ENCODE measurements at regions of chr1 and their contacts with region 1.

Region 1: GRCh38 chr1:160711602-160712311 is at the start of gene CD48:
- DNase-seq: no peak
- ATAC-seq: peak; percentile 56
- H3K4me3 ChIP-seq: peak within 1 kb of the TSS; percentile 93
- H3K27ac ChIP-seq: peak within 1 kb of the TSS; percentile 100
- H3K4me1 ChIP-seq: peaks cover 18% of the 10 kb centered on the region
- H3K27me3 ChIP-seq: no peaks in the 10 kb centered on the region
- CTCF ChIP-seq: no peak
- EP300 ChIP-seq: no peak; a peak in 2 of 4 replicates
- POLR2A ChIP-seq: peak; percentile 81
- RAD21 ChIP-seq: no peak
- polyA plus RNA-seq, gene CD48: 667 to 776 TPM

Region 2: DNA sequence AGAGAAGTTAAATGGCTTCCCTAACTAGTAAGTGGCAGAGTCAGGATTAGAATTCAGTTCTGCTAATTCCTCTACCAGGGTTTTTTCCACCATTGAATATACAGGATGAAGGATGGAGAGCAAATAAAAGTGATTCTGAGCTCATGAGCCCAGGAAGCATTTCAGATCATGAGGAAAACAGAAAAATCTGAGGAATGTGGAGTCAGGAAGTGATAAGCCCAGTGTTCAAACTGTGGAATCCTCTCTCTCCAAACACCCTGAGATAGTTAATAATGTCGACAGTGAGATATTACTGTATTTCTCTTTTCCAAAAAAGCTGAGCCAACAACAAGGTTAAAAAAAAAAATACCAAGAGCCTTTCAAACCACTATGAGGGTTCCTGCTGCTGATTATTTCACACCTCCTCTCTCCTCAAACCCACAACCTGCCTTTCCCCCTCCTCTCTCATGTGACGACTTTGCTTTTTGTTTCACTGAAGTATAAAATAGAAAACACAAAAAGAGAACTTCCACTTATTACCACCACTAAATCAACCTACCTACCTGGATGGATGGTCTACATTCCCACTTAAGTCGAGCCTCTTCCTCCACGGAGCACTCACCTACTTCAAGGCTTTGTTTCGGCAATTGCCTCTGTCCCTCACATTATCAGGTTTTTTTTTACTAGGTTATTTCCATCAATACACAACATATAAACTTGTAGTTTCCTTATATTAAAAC is 73.8 kb before region 1 on chr1:
- CTCF ChIA-PET with region 1: interaction called, 3 read pairs
- POLR2A ChIA-PET with region 1: interaction called, 13 read pairs
- RAD21 ChIA-PET with region 1: interaction called, 11 read pairs
- SMC1A ChIA-PET with region 1: interaction called, 36 read pairs
- in situ Hi-C with region 1: no loop called
- intact Hi-C with region 1: no loop called
- DNase-seq: no peak
- ATAC-seq: peak; percentile 29
- H3K4me3 ChIP-seq: peak overlapping the region; percentile 56
- H3K27ac ChIP-seq: peak overlapping the region; percentile 77
- H3K4me1 ChIP-seq: peaks cover 56% of the 10 kb centered on the region
- H3K27me3 ChIP-seq: no peaks in the 10 kb centered on the region
- CTCF ChIP-seq: no peak
- EP300 ChIP-seq: 0 out of 4 replicates have a peak, but pooled peaks have one; percentile 32 to 36
- POLR2A ChIP-seq: no peak
- RAD21 ChIP-seq: no peak

Region 3: GRCh38 chr1:160681067-160681890 is 30.5 kb before region 1 on chr1:
- CTCF ChIA-PET with region 1: interaction called, 59 read pairs
- POLR2A ChIA-PET with region 1: interaction called, 11 read pairs
- RAD21 ChIA-PET with region 1: interaction called, 42 read pairs
- SMC1A ChIA-PET with region 1: interaction called, 79 read pairs
- in situ Hi-C with region 1: no loop called
- intact Hi-C with region 1: loop called (anchors 5 kb)
- DNase-seq: no peak
- ATAC-seq: peak; percentile 89
- H3K4me3 ChIP-seq: no peak overlapping the region
- H3K27ac ChIP-seq: peak overlapping the region; percentile 14; the same call in 1 of the 2 replicates
- H3K4me1 ChIP-seq: peaks cover 38% of the 10 kb centered on the region
- H3K27me3 ChIP-seq: no peaks in the 10 kb centered on the region
- CTCF ChIP-seq: peak; percentile 85 to 97 (median 95); a peak in 5 of 6 replicates
- EP300 ChIP-seq: no peak
- POLR2A ChIP-seq: peak; percentile 61; the same call in 1 of the 2 replicates
- RAD21 ChIP-seq: peak; percentile 91

Region 4: DNA sequence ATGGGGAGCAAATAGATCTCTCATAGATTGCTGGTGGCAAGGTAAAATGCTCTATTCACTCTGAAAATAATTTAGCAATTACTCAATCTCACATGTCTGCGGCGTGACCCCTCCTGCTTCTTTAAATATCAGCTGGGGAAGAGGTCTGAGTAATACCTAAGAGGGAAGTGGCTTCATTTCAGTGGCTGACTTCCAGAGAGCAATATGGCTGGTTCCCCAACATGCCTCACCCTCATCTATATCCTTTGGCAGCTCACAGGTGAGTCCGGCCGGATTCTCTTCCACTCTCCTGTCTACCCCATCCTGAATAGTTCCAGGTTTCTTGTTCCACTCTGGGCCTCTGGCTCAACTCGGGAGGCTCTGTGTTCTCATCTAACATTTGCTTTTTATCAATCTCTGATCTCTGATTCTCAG is 27.3 kb after region 1 on chr1 and contains the start of gene SLAMF7:
- CTCF ChIA-PET with region 1: interaction called, 32 read pairs
- POLR2A ChIA-PET with region 1: interaction called, 39 read pairs
- RAD21 ChIA-PET with region 1: interaction called, 31 read pairs
- SMC1A ChIA-PET with region 1: interaction called, 68 read pairs
- in situ Hi-C with region 1: no loop called
- intact Hi-C with region 1: loop called (anchors 1 kb)
- DNase-seq: peak; percentile 81
- ATAC-seq: peak; percentile 72
- H3K4me3 ChIP-seq: peak within 1 kb of the TSS; percentile 99
- H3K27ac ChIP-seq: peak within 1 kb of the TSS; percentile 78
- H3K4me1 ChIP-seq: peaks cover 34% of the 10 kb centered on the region
- H3K27me3 ChIP-seq: no peaks in the 10 kb centered on the region
- CTCF ChIP-seq: no peak
- EP300 ChIP-seq: peak; percentile 38 to 45; a peak in 2 of 4 replicates
- POLR2A ChIP-seq: peak; percentile 88
- RAD21 ChIP-seq: no peak
- polyA plus RNA-seq, gene SLAMF7: 66.6 to 83.4 TPM

Region 5: GRCh38 chr1:160789702-160790611 is 78.2 kb after region 1 on chr1:
- CTCF ChIA-PET with region 1: interaction called, 3 read pairs
- POLR2A ChIA-PET with region 1: interaction called, 3 read pairs
- RAD21 ChIA-PET with region 1: interaction called, 12 read pairs
- SMC1A ChIA-PET with region 1: interaction called, 16 read pairs
- in situ Hi-C with region 1: no loop called
- intact Hi-C with region 1: no loop called
- DNase-seq: peak; percentile 89
- ATAC-seq: peak; percentile 91
- H3K4me3 ChIP-seq: no peak overlapping the region; the same call in 1 of the 2 replicates
- H3K27ac ChIP-seq: peak overlapping the region; percentile 86
- H3K4me1 ChIP-seq: peaks cover 19% of the 10 kb centered on the region
- H3K27me3 ChIP-seq: no peaks in the 10 kb centered on the region
- CTCF ChIP-seq: no peak
- EP300 ChIP-seq: peak; percentile 96 to 99
- POLR2A ChIP-seq: no peak
- RAD21 ChIP-seq: no peak

Region 6: GRCh38 chr1:160827407-160827806 is 115.7 kb after region 1 on chr1:
- CTCF ChIA-PET with region 1: no interaction called
- POLR2A ChIA-PET with region 1: no interaction called
- RAD21 ChIA-PET with region 1: no interaction called
- SMC1A ChIA-PET with region 1: no interaction called
- in situ Hi-C with region 1: no loop called
- intact Hi-C with region 1: no loop called
- DNase-seq: no peak
- ATAC-seq: no peak
- H3K4me3 ChIP-seq: no peak overlapping the region
- H3K27ac ChIP-seq: no peak overlapping the region
- H3K4me1 ChIP-seq: no peaks in the 10 kb centered on the region
- H3K27me3 ChIP-seq: no peaks in the 10 kb centered on the region
- CTCF ChIP-seq: no peak
- EP300 ChIP-seq: no peak
- POLR2A ChIP-seq: no peak
- RAD21 ChIP-seq: no peak

Measured in GM12878 (cell line).